ENCODE measurements at regions of chr6 and their contacts with region 1.

Region 1: GRCh38 chr6:13859871-13860555 is 45.7 kb upstream of the MCUR1 start:
- DNase-seq: no peak
- H3K4me3 Mint-ChIP-seq: peak overlapping the region; percentile 30
- H3K27ac Mint-ChIP-seq: no peak overlapping the region
- H3K4me1 Mint-ChIP-seq: peaks cover 3% of the 10 kb centered on the region
- H3K27me3 Mint-ChIP-seq: peaks cover 32% of the 10 kb centered on the region

Region 2: DNA sequence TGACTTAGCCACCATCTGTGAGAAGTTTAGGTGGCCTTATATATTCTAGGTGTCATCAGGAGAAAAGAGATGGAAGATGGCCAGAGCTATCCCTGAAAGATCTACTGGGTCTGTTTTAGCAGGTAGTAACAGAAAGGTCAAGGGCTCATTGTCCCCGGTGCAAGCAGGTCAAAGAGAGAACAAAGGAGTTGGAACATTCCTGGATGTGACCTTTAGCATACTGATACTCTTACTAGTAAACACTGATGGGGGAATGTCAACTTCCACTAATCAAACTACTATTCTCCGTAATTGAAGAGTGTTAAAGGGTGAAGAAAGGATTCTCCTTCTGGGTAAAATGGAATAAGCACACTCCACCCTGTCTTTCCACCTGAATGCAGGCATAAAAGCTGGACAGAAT is 41.7 kb before region 1 on chr6:
- CTCF ChIA-PET with region 1: no interaction called
- intact Hi-C with region 1: no loop called
- DNase-seq: no peak
- H3K4me3 Mint-ChIP-seq: no peak overlapping the region
- H3K27ac Mint-ChIP-seq: no peak overlapping the region
- H3K4me1 Mint-ChIP-seq: peaks cover 6% of the 10 kb centered on the region
- H3K27me3 Mint-ChIP-seq: no peaks in the 10 kb centered on the region

Region 3: GRCh38 chr6:13838616-13839015 is 21.4 kb before region 1 on chr6:
- CTCF ChIA-PET with region 1: no interaction called
- intact Hi-C with region 1: no loop called
- DNase-seq: no peak
- H3K4me3 Mint-ChIP-seq: no peak overlapping the region
- H3K27ac Mint-ChIP-seq: no peak overlapping the region
- H3K4me1 Mint-ChIP-seq: no peaks in the 10 kb centered on the region
- H3K27me3 Mint-ChIP-seq: no peaks in the 10 kb centered on the region

Region 4: GRCh38 chr6:13873285-13874190 is 13.5 kb after region 1 on chr6:
- CTCF ChIA-PET with region 1: interaction called, 12 read pairs
- intact Hi-C with region 1: no loop called
- DNase-seq: peak; percentile 77
- H3K4me3 Mint-ChIP-seq: peak overlapping the region; percentile 74
- H3K27ac Mint-ChIP-seq: no peak overlapping the region
- H3K4me1 Mint-ChIP-seq: peaks cover 6% of the 10 kb centered on the region
- H3K27me3 Mint-ChIP-seq: peaks cover 5% of the 10 kb centered on the region